Activated CD8-positive, alpha-beta T cell treated with anti-CD3 and anti-CD28 coated beads, Interleukin-2, amount 10 ng/mL, durations not matched to agents 7 days and 5 days (primary cell): ENCODE measurements at regions of chr9 and their contacts with region 1.

Region 1: GRCh38 chr9:3441197-3441816 is 84.5 kb downstream of the RFX3 start:
- DNase-seq: peak; percentile 61
- ATAC-seq: peak; percentile 74
- H3K4me3 Mint-ChIP-seq: no peak overlapping the region
- H3K27ac Mint-ChIP-seq: no peak overlapping the region
- H3K4me1 Mint-ChIP-seq: peaks cover 2% of the 10 kb centered on the region
- H3K27me3 Mint-ChIP-seq: no peaks in the 10 kb centered on the region

Region 2: DNA sequence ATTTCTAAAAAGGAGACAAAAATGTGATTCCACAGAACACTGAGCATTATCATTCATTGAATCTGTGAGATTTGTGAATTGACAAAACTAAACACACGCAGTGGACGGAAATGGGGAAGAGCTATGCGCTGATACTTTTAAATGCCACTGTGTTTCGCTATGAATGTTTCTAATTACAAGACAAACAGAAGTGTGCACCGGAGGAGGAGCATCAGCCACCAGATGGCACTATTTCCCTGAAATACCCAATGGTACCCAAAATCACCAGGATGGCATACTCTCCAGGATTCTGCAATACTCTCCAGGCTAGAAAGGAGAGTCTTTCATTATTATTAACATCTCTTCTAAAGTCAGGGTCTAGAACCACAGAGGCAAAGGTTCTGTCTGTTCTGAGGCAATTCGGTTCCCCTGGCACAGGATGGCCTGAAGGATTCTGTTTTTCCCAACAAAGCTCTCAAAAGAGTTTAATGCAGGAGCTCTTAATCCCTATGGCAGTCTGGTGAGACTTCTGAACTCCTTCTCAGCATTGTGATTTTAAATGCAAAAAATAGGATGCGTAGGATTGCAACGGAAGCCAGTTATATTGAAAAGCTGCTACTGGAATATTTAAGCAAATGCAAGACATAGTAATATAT is 583.6 kb before region 1 on chr9:
- CTCF ChIA-PET with region 1: interaction called, 10 read pairs
- POLR2A ChIA-PET with region 1: no interaction called
- DNase-seq: peak; percentile 81
- ATAC-seq: peak; percentile 84
- H3K4me3 Mint-ChIP-seq: no peak overlapping the region
- H3K27ac Mint-ChIP-seq: no peak overlapping the region
- H3K4me1 Mint-ChIP-seq: peaks cover 6% of the 10 kb centered on the region
- H3K27me3 Mint-ChIP-seq: peaks cover 21% of the 10 kb centered on the region

Region 3: GRCh38 chr9:3240656-3241268 is 200.5 kb before region 1 on chr9:
- CTCF ChIA-PET with region 1: interaction called, 106 read pairs
- POLR2A ChIA-PET with region 1: no interaction called
- DNase-seq: peak; percentile 77
- ATAC-seq: peak; percentile 97
- H3K4me3 Mint-ChIP-seq: no peak overlapping the region
- H3K27ac Mint-ChIP-seq: no peak overlapping the region
- H3K4me1 Mint-ChIP-seq: peaks cover 9% of the 10 kb centered on the region
- H3K27me3 Mint-ChIP-seq: no peaks in the 10 kb centered on the region

Region 4: DNA sequence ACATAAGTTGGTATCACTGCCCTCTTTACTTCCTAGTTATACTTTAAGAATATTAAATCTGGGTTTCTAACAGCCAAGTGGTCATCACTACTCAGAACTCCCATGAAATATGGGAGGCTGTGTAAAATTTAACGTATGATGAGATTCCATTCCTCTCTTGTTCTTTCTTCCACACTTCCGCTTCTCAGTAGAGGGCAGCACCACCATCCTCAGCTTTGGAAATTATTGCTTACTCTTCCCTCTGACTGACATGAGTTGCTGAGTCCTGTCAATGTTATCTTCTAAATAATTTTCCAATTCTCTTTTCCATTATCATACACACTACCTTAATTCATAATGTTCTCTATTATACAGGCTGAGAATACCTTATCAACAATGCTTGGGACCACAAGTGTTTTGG is 109.5 kb before region 1 on chr9:
- CTCF ChIA-PET with region 1: interaction called, 11 read pairs
- POLR2A ChIA-PET with region 1: no interaction called
- DNase-seq: no peak
- ATAC-seq: no peak
- H3K4me3 Mint-ChIP-seq: no peak overlapping the region
- H3K27ac Mint-ChIP-seq: no peak overlapping the region
- H3K4me1 Mint-ChIP-seq: no peaks in the 10 kb centered on the region
- H3K27me3 Mint-ChIP-seq: no peaks in the 10 kb centered on the region

Region 5: GRCh38 chr9:3458806-3459475 is 17.6 kb after region 1 on chr9:
- CTCF ChIA-PET with region 1: interaction called, 10 read pairs
- POLR2A ChIA-PET with region 1: no interaction called
- DNase-seq: no peak
- ATAC-seq: no peak
- H3K4me3 Mint-ChIP-seq: no peak overlapping the region
- H3K27ac Mint-ChIP-seq: no peak overlapping the region
- H3K4me1 Mint-ChIP-seq: no peaks in the 10 kb centered on the region
- H3K27me3 Mint-ChIP-seq: no peaks in the 10 kb centered on the region